Dendritic cell treated with granulocyte-macrophage colony-stimulating factor and Interleukin-4, amounts not matched to agents 40 ng/mL and 50 ng/mL, for 4 days (primary cell): ENCODE measurements at regions of chr2 and their contacts with region 1.

Region 1: DNA sequence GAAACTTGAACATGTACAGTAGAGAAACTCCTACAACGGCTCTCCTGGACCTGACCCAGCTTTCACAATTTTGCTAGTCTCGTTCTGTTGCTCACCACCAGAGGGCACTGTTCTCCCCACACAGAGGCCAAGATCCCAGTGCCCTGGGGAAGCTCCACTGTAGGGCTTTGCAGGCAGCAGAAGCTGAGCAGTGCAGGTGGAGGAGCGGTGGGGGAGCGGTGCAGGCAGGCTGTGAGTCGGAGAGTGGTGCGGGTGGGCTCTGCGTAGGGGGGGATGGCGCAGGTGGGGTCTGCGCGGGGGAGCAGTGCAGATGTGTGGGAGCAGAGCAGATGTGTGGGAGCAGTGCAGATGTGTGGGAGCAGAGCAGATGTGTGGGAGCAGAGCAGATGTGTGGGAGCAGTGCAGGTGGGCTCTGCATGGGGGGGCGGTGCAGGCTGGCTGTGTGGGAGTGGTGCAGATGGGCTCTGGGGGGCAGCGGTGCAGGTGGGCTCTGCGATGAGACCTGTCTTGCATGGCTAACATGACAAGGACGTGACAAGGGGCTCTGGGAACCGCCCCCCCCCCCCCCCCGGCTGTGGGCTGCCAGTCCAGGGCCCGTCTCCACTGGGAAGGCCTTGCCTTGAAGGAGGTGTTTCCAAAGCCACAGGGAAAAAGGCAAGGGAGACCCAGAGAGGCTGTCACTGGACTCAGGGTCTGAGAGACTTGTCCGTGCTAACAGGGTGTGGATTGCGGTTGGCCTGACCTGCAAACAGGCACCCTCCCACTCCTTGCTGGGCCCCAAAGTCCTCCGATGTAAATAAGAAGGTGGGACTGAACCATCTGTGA is 7.3 kb downstream of the CYS1 start:
- H3K4me3 Mint-ChIP-seq: no peak overlapping the region
- H3K27ac Mint-ChIP-seq: no peak overlapping the region
- H3K4me1 Mint-ChIP-seq: peaks cover 7% of the 10 kb centered on the region
- H3K27me3 Mint-ChIP-seq: peaks cover 62% of the 10 kb centered on the region

Region 2: DNA sequence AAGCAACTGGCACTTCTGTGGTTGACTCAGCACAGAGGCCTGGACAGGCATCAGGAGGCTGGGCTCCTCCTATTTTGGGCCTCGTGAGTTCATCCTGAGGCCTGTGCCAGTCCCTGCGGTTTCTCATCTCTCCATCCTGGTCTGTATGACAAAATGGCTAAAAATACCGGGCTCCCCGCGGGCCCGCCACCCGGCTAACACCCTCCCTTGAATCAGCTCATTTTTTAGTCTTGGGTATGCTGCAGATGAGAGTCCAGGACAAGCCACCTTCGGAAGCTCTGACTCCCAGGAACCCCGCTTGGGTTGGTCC is 379.7 kb before region 1 on chr2:
- intact Hi-C with region 1: no loop called
- H3K4me3 Mint-ChIP-seq: no peak overlapping the region
- H3K27ac Mint-ChIP-seq: no peak overlapping the region
- H3K4me1 Mint-ChIP-seq: peaks cover 27% of the 10 kb centered on the region
- H3K27me3 Mint-ChIP-seq: peaks cover 17% of the 10 kb centered on the region

Region 3: DNA sequence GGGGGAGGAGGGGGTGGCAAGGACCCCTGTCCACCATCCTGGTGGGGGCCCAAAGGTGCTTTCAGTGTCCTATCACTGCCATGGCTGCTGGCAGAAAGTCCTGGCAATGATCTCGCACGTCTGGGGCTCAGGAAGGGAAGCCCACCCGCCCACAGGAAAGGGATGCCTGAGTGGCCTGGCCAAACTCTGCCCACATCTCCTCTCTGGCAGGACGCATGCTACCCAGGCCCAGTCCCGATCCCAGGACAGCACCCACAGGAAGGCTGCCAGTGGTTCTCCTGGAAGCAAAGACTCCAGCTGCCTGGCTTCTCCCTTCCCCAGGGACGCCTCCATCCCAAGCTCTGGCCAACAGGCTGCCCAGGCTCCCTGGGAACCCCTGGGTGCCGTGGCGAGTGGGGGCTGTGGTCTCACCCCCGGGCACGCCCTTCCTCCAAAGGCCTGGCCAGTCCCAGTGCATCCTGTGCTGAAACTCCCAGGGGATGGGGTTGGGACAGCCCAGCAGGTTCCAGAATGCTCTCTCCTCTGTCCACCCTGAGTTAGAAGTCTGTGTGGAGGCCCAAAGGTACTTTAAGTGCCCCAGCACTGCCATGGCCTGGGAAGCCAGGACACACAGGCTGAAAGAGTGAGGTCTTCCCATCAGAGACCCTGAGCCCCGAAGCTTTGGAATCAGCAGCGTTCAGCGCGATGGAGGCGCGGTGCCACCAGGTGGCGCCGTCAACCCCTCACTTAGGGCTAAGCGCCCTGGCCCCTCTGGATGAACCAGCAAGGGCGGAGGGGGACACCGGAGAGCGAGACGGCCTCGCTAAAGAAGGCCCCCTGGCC is 259.3 kb before region 1 on chr2:
- intact Hi-C with region 1: no loop called
- H3K4me3 Mint-ChIP-seq: peak overlapping the region; percentile 27
- H3K27ac Mint-ChIP-seq: peak overlapping the region; percentile 47
- H3K4me1 Mint-ChIP-seq: peaks cover 27% of the 10 kb centered on the region
- H3K27me3 Mint-ChIP-seq: peaks cover 20% of the 10 kb centered on the region

Region 4: GRCh38 chr2:10097352-10098148 is 24.7 kb after region 1 on chr2:
- intact Hi-C with region 1: loop called (anchors 2 kb)
- H3K4me3 Mint-ChIP-seq: no peak overlapping the region
- H3K27ac Mint-ChIP-seq: no peak overlapping the region
- H3K4me1 Mint-ChIP-seq: peaks cover 16% of the 10 kb centered on the region
- H3K27me3 Mint-ChIP-seq: peaks cover 39% of the 10 kb centered on the region

Region 5: GRCh38 chr2:10434886-10435819 is 362.3 kb after region 1 on chr2:
- intact Hi-C with region 1: loop called (anchors 1 kb)
- H3K4me3 Mint-ChIP-seq: no peak overlapping the region
- H3K27ac Mint-ChIP-seq: no peak overlapping the region
- H3K4me1 Mint-ChIP-seq: peaks cover 29% of the 10 kb centered on the region
- H3K27me3 Mint-ChIP-seq: peaks cover 14% of the 10 kb centered on the region

Region 6: GRCh38 chr2:10659898-10660568 is 587.2 kb after region 1 on chr2:
- intact Hi-C with region 1: loop called (anchors 10 kb)
- H3K4me3 Mint-ChIP-seq: no peak overlapping the region
- H3K27ac Mint-ChIP-seq: no peak overlapping the region
- H3K4me1 Mint-ChIP-seq: no peaks in the 10 kb centered on the region
- H3K27me3 Mint-ChIP-seq: no peaks in the 10 kb centered on the region